CD4-positive, alpha-beta T cell (primary cell): ENCODE measurements at regions of chr4 and their contacts with region 1.

Region 1: GRCh38 chr4:177441803-177442622 is at the start of gene AGA:
- DNase-seq: peak; percentile 87 to 98 (median 94)
- ATAC-seq: peak; percentile 89
- H3K4me3 ChIP-seq: peak within 1 kb of the TSS; percentile 65
- H3K4me3 Mint-ChIP-seq: peak within 1 kb of the TSS; percentile 89
- H3K27ac ChIP-seq: peak within 1 kb of the TSS; percentile 89 to 90
- H3K27ac Mint-ChIP-seq: peak within 1 kb of the TSS; percentile 91
- H3K4me1 ChIP-seq: peaks cover 17% of the 10 kb centered on the region
- H3K4me1 Mint-ChIP-seq: peaks cover 46% of the 10 kb centered on the region
- H3K27me3 ChIP-seq: no peaks in the 10 kb centered on the region
- H3K27me3 Mint-ChIP-seq: no peaks in the 10 kb centered on the region
- CTCF ChIP-seq: no peak
- total RNA-seq, gene AGA: 14.6 to 15.4 TPM

Region 2: DNA sequence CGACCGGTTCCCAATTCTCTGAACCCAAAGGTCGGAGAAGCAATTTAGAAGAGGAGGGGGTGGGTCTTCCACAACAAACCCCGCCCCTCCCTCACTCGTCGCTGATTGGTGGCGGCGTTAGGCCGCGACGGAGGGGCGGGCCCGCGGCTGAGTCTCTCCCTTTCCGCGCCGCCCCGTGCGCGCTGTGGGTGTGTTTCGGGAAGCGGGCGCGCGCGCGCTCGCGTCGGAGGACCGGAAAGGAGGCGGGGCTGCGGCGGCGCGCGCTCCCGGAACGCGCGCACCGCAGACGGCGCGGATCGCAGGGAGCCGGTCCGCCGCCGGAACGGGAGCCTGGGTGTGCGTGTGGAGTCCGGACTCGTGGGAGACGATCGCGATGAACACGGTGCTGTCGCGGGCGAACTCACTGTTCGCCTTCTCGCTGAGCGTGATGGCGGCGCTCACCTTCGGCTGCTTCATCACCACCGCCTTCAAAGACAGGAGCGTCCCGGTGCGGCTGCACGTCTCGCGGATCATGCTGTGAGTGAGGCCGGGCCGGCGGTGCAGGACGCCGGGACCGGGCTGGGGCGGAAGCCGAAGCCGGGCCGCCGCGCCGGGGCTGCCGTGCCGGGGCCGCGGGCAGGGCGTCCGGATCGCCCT is 1122.2 kb before region 1 on chr4 and contains the start of gene SPCS3:
- CTCF ChIA-PET with region 1: no interaction called
- POLR2A ChIA-PET with region 1: interaction called, 5 read pairs
- intact Hi-C with region 1: loop called in 1 of 2 experiments (anchors 2 kb)
- DNase-seq: peak; percentile 89 to 99 (median 94)
- ATAC-seq: peak; percentile 89
- H3K4me3 ChIP-seq: peak within 1 kb of the TSS; percentile 72
- H3K4me3 Mint-ChIP-seq: peak within 1 kb of the TSS; percentile 96
- H3K27ac ChIP-seq: peak within 1 kb of the TSS; percentile 86 to 88
- H3K27ac Mint-ChIP-seq: peak within 1 kb of the TSS; percentile 90
- H3K4me1 ChIP-seq: peaks cover under 1% of the 10 kb centered on the region
- H3K4me1 Mint-ChIP-seq: peaks cover 60% of the 10 kb centered on the region
- H3K27me3 ChIP-seq: no peaks in the 10 kb centered on the region
- H3K27me3 Mint-ChIP-seq: no peaks in the 10 kb centered on the region
- CTCF ChIP-seq: no peak
- total RNA-seq, gene SPCS3: 149 TPM

Region 3: DNA sequence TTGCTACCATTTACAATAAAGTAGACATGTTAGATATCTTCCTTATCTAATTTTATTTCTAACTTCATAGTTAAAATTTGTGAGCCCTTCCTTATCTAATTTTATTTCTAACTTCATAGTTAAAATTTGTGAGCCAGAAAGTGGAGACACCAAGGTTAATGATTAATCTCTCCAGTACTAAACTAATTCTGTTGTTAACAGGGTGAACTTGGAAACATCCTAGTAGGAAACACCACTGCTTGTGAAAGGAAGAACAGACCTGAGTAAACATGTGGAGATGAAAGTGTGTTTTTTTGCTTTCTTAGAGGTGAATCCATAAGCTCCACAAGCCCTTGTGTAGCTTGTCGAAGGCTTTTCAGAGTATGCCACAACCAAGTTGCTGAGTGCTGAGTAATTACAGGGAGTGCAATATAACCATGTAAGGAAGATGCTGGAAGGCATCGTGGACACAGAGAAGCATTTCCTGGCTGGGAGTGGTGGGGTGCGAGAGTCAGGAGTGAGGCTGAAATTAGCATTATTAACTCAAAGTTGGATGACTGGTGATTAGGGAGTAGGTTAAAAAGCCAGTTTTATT is 250.9 kb before region 1 on chr4:
- CTCF ChIA-PET with region 1: no interaction called
- POLR2A ChIA-PET with region 1: no interaction called
- intact Hi-C with region 1: no loop called
- DNase-seq: no peak
- ATAC-seq: no peak
- H3K4me3 ChIP-seq: no peak overlapping the region
- H3K4me3 Mint-ChIP-seq: no peak overlapping the region
- H3K27ac ChIP-seq: no peak overlapping the region
- H3K27ac Mint-ChIP-seq: no peak overlapping the region
- H3K4me1 ChIP-seq: no peaks in the 10 kb centered on the region
- H3K4me1 Mint-ChIP-seq: no peaks in the 10 kb centered on the region
- H3K27me3 ChIP-seq: no peaks in the 10 kb centered on the region
- H3K27me3 Mint-ChIP-seq: no peaks in the 10 kb centered on the region
- CTCF ChIP-seq: no peak

Region 4: DNA sequence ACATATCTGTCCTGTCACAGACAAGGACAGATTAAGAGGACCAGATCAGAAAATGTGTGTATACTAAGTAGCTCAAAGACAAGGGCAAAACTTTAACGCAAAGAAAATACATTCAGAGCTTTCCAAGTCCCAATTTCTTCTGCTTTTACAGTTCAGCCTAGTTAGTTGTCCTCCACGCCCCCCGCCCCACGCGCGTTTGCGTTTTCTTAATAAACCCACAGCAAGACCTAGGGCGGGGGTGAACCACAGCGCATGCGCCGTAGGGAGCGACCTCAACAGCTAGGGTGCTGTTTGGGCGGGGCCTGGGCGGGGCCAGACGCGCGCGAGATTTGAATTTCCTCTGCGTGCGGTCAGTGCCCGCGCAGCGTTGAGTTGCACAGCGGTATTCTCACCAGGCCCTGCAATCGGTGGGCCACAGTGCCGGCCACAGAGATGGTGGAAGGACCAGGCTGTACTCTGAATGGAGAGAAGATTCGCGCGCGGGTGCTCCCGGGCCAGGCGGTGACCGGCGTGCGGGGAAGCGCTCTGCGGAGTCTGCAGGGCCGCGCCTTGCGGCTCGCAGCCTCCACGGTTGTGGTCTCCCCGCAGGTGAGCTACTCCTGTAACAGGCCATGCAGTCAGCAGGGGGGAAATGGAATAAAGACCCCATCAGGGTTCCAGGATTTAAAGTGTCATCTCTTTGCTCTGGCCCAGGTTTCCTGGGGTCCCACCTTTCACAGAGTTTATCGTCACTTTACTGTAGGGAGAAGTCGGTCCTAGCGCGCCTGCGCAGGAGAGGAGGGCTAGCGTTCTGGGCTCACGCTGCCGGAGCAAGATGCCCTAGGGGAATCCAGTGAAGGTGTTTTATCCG is 132.3 kb before region 1 on chr4 and contains the start of gene NEIL3:
- CTCF ChIA-PET with region 1: interaction called, 3 read pairs
- POLR2A ChIA-PET with region 1: interaction called, 30 read pairs
- intact Hi-C with region 1: loop called (anchors 1 to 2 kb)
- DNase-seq: peak; percentile 91 to 98 (median 95)
- ATAC-seq: peak; percentile 81
- H3K4me3 ChIP-seq: peak within 1 kb of the TSS; percentile 72
- H3K4me3 Mint-ChIP-seq: peak within 1 kb of the TSS; percentile 88
- H3K27ac ChIP-seq: no peak within 1 kb of the TSS
- H3K27ac Mint-ChIP-seq: peak within 1 kb of the TSS; percentile 78
- H3K4me1 ChIP-seq: peaks cover 5% of the 10 kb centered on the region
- H3K4me1 Mint-ChIP-seq: peaks cover 37% of the 10 kb centered on the region
- H3K27me3 ChIP-seq: no peaks in the 10 kb centered on the region
- H3K27me3 Mint-ChIP-seq: no peaks in the 10 kb centered on the region
- CTCF ChIP-seq: no peak
- total RNA-seq, gene NEIL3: 0.22 to 0.25 TPM

Region 5: GRCh38 chr4:177393236-177393635 is 48.8 kb before region 1 on chr4:
- CTCF ChIA-PET with region 1: no interaction called
- POLR2A ChIA-PET with region 1: interaction called, 60 read pairs
- intact Hi-C with region 1: loop called (anchors 5 kb)
- DNase-seq: peak in 10 of 14 experiments; percentile 5 to 59 (median 24)
- ATAC-seq: peak; percentile 86
- H3K4me3 ChIP-seq: no peak overlapping the region
- H3K4me3 Mint-ChIP-seq: peak overlapping the region; percentile 67
- H3K27ac ChIP-seq: peak overlapping the region in 1 of 2 donors; percentile 32
- H3K27ac Mint-ChIP-seq: peak overlapping the region; percentile 83
- H3K4me1 ChIP-seq: peaks cover 14% of the 10 kb centered on the region
- H3K4me1 Mint-ChIP-seq: peaks cover 31% of the 10 kb centered on the region
- H3K27me3 ChIP-seq: no peaks in the 10 kb centered on the region
- H3K27me3 Mint-ChIP-seq: no peaks in the 10 kb centered on the region
- CTCF ChIP-seq: no peak